ENCODE measurements at regions of chr12 and their contacts with region 1.

Region 1: DNA sequence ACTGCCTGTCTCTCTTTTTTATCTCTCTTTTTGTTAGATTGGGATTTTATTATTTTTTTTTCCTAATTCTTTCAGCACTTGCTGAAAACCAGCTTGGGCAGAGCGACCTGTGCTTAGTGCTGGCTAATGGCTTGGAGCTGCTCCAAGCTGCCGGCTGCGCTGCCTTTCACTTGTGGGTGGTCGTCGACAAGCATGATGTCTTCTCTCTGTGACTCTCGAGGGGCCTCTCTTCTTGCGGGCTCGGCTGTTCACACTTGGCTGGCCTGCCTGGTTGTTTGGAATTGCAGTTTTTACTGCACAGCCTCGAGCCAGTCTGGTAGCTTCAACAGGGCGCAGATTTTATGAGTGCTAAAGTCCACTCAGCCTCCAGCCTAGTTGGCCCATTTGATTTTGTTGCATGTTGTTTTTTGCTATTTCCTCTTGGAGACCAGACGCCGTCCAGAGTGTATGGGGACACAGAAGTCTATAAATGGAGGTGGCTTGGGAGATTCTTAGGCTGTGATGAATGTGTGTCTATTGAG is 18.6 kb downstream of the TPCN1 start:
- DNase-seq: no peak
- ATAC-seq: no peak
- H3K4me3 ChIP-seq: no peak overlapping the region
- H3K27ac ChIP-seq: no peak overlapping the region
- H3K4me1 ChIP-seq: peaks cover 32 to 35% of the 10 kb centered on the region in 2 experiments
- H3K27me3 ChIP-seq: no peaks in the 10 kb centered on the region
- CTCF ChIP-seq: no peak
- EP300 ChIP-seq: no peak
- POLR2A ChIP-seq: no peak
- RAD21 ChIP-seq: no peak

Region 2: DNA sequence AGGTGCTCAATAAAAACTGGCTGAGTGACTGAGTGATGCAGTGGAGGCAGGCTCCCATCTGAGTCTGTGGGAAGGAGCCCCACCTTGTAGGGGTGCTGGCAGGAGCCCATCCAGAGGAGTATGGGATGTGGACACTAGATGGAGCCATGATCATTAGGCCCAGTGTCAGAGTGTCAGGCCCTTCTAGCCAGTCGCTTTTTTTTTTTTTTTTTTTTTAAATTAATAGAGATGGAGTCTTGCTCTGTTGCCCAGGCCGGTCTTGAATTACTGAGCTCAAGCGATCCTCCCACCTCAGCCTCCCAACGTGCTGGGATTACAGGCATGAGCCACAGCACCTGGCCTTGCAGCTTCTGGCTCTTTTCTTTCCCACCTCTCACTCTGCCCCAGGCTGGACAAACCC is 42.9 kb before region 1 on chr12:
- CTCF ChIA-PET with region 1: no interaction called
- POLR2A ChIA-PET with region 1: no interaction called
- in situ Hi-C with region 1: no loop called
- intact Hi-C with region 1: loop called (anchors 5 kb)
- DNase-seq: peak; percentile 73 to 87 (median 78)
- ATAC-seq: peak; percentile 97
- H3K4me3 ChIP-seq: no peak overlapping the region
- H3K27ac ChIP-seq: no peak overlapping the region
- H3K4me1 ChIP-seq: peaks cover 2 to 21% of the 10 kb centered on the region in 2 experiments; a peak in 4 of 5 replicates
- H3K27me3 ChIP-seq: no peaks in the 10 kb centered on the region
- CTCF ChIP-seq: peak; percentile 77 to 91 (median 78)
- EP300 ChIP-seq: no peak
- POLR2A ChIP-seq: no peak
- RAD21 ChIP-seq: peak; percentile 66 to 81

Region 3: GRCh38 chr12:113221181-113221997 is 18.5 kb before region 1 on chr12 and contains the start of gene TPCN1:
- CTCF ChIA-PET with region 1: no interaction called
- POLR2A ChIA-PET with region 1: interaction called, 25 read pairs
- in situ Hi-C with region 1: no loop called
- intact Hi-C with region 1: no loop called
- DNase-seq: peak; percentile 96 to 100 (median 98)
- ATAC-seq: peak; percentile 98
- H3K4me3 ChIP-seq: peak within 1 kb of the TSS; percentile 67
- H3K27ac ChIP-seq: peak within 1 kb of the TSS; percentile 62
- H3K4me1 ChIP-seq: peaks cover 14 to 23% of the 10 kb centered on the region in 2 experiments; a peak in 4 of 5 replicates
- H3K27me3 ChIP-seq: no peaks in the 10 kb centered on the region
- CTCF ChIP-seq: no peak
- EP300 ChIP-seq: no peak
- POLR2A ChIP-seq: peak; percentile 89
- RAD21 ChIP-seq: 0 out of 4 replicates have a peak, but pooled peaks of 1 of the 2 experiments have one; percentile 9
- polyA plus RNA-seq, gene TPCN1: 0.80 to 1.1 TPM

Region 4: GRCh38 chr12:113325916-113326315 is 86.0 kb after region 1 on chr12:
- CTCF ChIA-PET with region 1: no interaction called
- POLR2A ChIA-PET with region 1: no interaction called
- in situ Hi-C with region 1: no loop called
- intact Hi-C with region 1: no loop called
- DNase-seq: no peak
- ATAC-seq: no peak
- H3K4me3 ChIP-seq: no peak overlapping the region
- H3K27ac ChIP-seq: no peak overlapping the region
- H3K4me1 ChIP-seq: peaks cover 2 to 4% of the 10 kb centered on the region in 2 experiments; a peak in 3 of 5 replicates
- H3K27me3 ChIP-seq: no peaks in the 10 kb centered on the region
- CTCF ChIP-seq: no peak
- EP300 ChIP-seq: no peak
- POLR2A ChIP-seq: no peak
- RAD21 ChIP-seq: no peak

Region 5: GRCh38 chr12:113619202-113619601 is 379.3 kb after region 1 on chr12:
- CTCF ChIA-PET with region 1: no interaction called
- POLR2A ChIA-PET with region 1: no interaction called
- in situ Hi-C with region 1: no loop called
- intact Hi-C with region 1: no loop called
- DNase-seq: no peak
- ATAC-seq: no peak; the same call in 2 of the 3 replicates
- H3K4me3 ChIP-seq: no peak overlapping the region
- H3K27ac ChIP-seq: no peak overlapping the region
- H3K4me1 ChIP-seq: no peaks in the 10 kb centered on the region
- H3K27me3 ChIP-seq: peaks cover 0 to 13% of the 10 kb centered on the region in 2 experiments; a peak in 3 of 5 replicates
- CTCF ChIP-seq: no peak
- EP300 ChIP-seq: no peak
- POLR2A ChIP-seq: no peak
- RAD21 ChIP-seq: no peak